ENCODE measurements at regions of chr20 and their contacts with region 1.

Region 1: DNA sequence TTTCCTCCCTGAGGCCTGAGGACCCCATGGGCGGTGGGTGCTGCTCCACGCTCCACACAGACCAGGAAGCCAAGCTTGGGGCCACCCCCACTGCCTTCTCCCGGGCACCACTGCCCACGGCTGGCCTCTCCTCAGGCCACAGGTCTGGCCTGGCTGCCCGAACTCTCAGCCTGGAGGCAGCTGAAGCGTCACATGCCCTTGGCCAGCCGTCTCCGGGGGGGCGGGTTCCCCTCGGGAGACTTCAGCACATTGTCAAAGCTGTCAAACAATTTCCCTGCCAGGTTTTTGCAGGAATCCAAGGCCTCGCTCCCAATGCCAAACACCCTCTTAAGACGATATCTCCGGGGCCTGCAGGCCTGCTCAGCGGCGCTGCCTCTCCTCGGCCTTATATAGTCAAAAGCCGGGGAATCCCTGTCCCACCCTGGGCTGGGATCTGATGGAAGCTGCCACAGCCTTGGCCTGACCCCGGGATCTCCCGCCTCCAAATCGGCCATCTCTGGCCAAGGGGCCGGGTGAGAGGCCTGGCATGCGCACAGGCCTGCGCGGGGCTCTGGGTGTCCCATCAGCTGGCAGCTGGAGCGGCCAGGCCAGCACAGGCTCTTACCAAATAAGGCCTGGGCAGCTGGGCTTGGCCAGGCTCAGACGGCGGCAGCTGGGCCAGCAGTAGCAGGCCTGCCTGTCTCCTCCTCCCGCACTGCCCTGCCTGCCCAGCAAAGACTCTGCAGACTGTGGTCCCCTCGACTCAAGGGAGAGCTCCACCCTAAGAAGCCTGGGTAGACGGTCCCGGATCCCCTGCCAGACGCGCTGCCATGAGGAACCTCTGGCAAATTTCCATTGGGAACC is 49.7 kb downstream of the RBM38 start:
- DNase-seq: peak; percentile 85 to 86
- ATAC-seq: peak; percentile 83 to 90 (median 87)
- H3K4me3 ChIP-seq: no peak overlapping the region
- H3K27ac ChIP-seq: peak overlapping the region; percentile 58 to 98 (median 86)
- H3K4me1 ChIP-seq: peaks cover 11 to 73% (median 29%) of the 10 kb centered on the region in 9 donors
- H3K27me3 ChIP-seq: no peaks in the 10 kb centered on the region
- CTCF ChIP-seq: no peak

Region 2: DNA sequence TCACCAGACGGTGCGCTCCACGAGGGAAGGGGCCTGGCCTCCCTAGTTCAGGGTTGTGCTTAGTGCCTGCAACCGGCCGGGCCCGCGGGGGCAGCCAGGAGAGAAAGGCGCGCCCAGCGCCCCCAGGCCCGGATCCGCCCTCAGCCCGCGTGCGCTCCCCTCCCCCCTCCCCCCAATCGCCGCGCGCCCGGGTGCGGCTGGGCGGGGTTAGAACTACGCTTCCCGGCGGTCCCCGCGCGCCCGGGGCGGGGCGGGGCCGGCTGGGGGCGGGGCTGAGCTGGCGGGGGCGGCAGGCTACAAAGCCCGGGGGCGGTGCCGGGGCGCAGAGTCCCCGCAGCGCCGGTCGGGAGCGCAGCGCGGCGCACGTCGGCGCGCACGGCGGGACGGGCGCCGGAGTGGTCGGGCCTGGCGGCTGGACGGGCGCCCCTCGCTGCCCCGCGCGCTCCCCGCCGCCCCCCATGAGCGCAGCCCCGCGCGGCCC is 49.8 kb before region 1 on chr20 and contains the start of gene RBM38:
- intact Hi-C with region 1: loop called in 4 of 10 experiments (anchors 2 to 5 kb)
- DNase-seq: peak; percentile 60 to 78
- ATAC-seq: peak; percentile 43 to 83 (median 66)
- H3K4me3 ChIP-seq: peak within 1 kb of the TSS; percentile 69 to 84 (median 73)
- H3K27ac ChIP-seq: peak within 1 kb of the TSS; percentile 88 to 97 (median 90)
- H3K4me1 ChIP-seq: peaks cover 14 to 64% (median 58%) of the 10 kb centered on the region in 9 donors
- H3K27me3 ChIP-seq: no peaks in the 10 kb centered on the region
- CTCF ChIP-seq: no peak
- total RNA-seq, gene RBM38: 35.5 to 119 (median 50.2) TPM

Region 3: GRCh38 chr20:57460781-57461465 is 20.0 kb after region 1 on chr20:
- intact Hi-C with region 1: loop called in 1 of 10 experiments (anchors 2 kb)
- DNase-seq: peak; percentile 33 to 37
- ATAC-seq: peak; percentile 43 to 89 (median 73)
- H3K4me3 ChIP-seq: no peak overlapping the region
- H3K27ac ChIP-seq: peak overlapping the region in 7 of 10 donors; percentile 20 to 65 (median 48)
- H3K4me1 ChIP-seq: peaks cover 0 to 55% (median 26%) of the 10 kb centered on the region in 9 donors
- H3K27me3 ChIP-seq: peaks cover 0 to 4% (median 0%) of the 10 kb centered on the region in 7 donors
- CTCF ChIP-seq: no peak